ENCODE measurements at regions of chrX and their contacts with region 1.

Region 1: DNA sequence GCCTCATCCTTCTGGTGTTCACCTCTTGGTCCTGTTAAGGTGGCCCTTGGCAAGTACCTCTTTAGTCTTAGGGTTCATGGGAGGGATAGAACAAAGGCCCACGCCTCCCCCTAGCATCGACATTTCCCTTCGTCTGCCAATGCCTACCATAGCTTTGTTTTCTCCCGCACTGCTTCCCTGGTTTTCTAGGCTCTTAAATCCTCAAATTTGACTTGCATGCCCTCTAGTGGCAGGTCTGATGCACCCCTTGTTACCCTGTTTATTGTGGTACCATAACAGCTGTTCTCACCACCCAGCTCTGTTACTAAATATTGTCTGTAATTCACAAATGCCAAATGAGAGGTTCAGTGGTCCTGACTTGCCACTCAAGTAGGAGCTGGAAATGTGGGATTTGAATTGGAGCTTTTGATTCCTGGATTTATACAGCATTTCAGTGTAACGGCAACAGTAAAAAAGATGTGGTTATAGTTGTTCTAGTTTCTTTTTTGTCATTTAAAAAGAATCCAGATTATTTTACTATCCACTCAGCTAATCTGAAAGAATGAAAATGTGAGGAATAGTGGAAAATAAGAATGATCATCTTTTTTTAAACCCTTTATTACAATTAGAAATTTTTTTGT is 100.1 kb downstream of the REPS2 start:
- DNase-seq: peak; percentile 41 to 76 (median 57)
- H3K4me3 ChIP-seq: no peak overlapping the region
- H3K27ac ChIP-seq: no peak overlapping the region
- H3K4me1 ChIP-seq: no peaks in the 10 kb centered on the region
- H3K27me3 ChIP-seq: no peaks in the 10 kb centered on the region
- CTCF ChIP-seq: peak in 2 of 3 donors; percentile 62 to 66
- EP300 ChIP-seq: no peak
- POLR2A ChIP-seq: no peak

Region 2: DNA sequence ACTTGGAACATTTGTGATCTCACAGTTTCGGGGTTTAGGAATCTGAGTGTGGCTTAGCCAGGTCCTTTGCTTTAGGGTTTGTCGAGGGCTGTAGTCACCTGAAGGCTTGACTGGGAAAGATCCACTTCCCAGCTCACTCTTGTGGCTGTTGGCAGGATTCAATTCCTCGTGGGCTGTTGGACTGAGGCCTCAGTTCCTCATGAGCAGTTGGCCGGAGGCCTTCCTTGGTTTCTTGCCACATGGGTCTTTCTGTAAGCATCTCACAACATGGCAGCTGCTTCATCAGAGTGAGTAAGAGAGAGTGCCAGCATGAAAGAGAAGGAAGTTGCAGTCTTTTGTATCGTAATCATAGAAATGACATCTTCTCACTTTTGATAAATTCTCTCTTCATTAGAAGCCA is 249.2 kb before region 1 on chrX:
- intact Hi-C with region 1: no loop called
- DNase-seq: peak in 1 of 5 donors; percentile 27
- H3K4me3 ChIP-seq: no peak overlapping the region
- H3K27ac ChIP-seq: no peak overlapping the region
- H3K4me1 ChIP-seq: no peaks in the 10 kb centered on the region
- H3K27me3 ChIP-seq: no peaks in the 10 kb centered on the region
- CTCF ChIP-seq: no peak
- EP300 ChIP-seq: no peak
- POLR2A ChIP-seq: no peak

Region 3: GRCh38 chrX:16882702-16883486 is 163.7 kb before region 1 on chrX:
- intact Hi-C with region 1: loop called in 2 of 4 experiments (anchors 5 to 10 kb)
- DNase-seq: peak; percentile 60 to 79 (median 78)
- H3K4me3 ChIP-seq: peak overlapping the region; percentile 34
- H3K27ac ChIP-seq: peak overlapping the region; percentile 16 to 55
- H3K4me1 ChIP-seq: no peaks in the 10 kb centered on the region
- H3K27me3 ChIP-seq: no peaks in the 10 kb centered on the region
- CTCF ChIP-seq: peak; percentile 41 to 54 (median 49)
- EP300 ChIP-seq: no peak
- POLR2A ChIP-seq: no peak

Region 4: DNA sequence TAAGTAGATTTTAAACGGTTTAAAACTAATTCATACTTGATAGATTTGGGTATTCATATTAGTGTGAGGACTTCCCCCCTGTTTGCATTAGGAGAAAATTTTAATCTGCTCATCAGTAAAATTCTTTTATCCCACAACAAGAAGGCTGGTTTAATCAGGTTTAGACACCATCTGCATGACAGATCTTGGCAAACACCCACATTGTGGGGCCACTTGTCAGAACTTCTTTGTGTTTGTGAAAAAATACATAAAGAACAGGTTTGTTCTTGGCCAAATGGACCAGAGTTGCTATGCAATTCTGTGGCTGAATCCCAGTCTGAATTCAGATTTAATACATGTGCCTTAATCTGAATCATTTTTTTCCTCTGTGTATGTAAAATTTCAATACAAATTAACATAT is 20.9 kb after region 1 on chrX:
- intact Hi-C with region 1: no loop called
- DNase-seq: no peak
- H3K4me3 ChIP-seq: no peak overlapping the region
- H3K27ac ChIP-seq: no peak overlapping the region
- H3K4me1 ChIP-seq: no peaks in the 10 kb centered on the region
- H3K27me3 ChIP-seq: no peaks in the 10 kb centered on the region
- CTCF ChIP-seq: no peak
- EP300 ChIP-seq: no peak
- POLR2A ChIP-seq: no peak

Region 5: DNA sequence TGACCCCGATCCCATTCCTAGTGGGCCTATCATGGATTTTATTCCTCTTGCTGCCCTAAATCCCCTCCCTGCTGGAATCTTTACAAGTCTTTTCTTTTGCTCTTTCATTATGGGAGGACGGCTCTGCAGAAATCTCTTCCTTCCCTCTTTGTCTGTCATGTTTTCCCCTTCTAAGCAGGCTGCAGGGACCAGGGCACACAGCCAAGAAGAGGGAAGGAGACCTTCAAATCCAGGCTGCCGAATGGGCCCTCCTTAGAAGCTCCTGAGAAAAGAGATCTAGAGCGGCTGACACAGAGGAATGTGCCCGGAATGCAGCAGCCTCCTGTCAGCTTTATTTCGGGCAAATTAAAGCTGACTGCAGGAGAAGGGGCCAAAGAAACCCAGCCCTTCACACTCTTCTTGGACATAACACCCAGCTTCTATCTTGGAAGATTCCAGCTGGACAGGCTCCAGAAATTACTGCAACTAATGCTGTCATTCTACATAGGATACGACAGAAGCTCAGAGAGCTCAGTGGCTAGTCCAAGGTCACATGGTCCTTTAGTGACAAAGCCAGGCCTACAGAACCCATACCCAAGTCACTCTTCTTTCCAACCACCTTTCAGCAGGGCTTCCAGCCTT is 140.7 kb after region 1 on chrX:
- intact Hi-C with region 1: no loop called
- DNase-seq: peak in 1 of 5 donors; percentile 12
- H3K4me3 ChIP-seq: no peak overlapping the region
- H3K27ac ChIP-seq: no peak overlapping the region
- H3K4me1 ChIP-seq: peaks cover 2% of the 10 kb centered on the region
- H3K27me3 ChIP-seq: no peaks in the 10 kb centered on the region
- CTCF ChIP-seq: no peak
- EP300 ChIP-seq: no peak
- POLR2A ChIP-seq: no peak